Gastrocnemius medialis (tissue), 4 donors: ENCODE measurements at regions of chr3 and their contacts with region 1.

Region 1: GRCh38 chr3:149129326-149130205 is at the start of gene HPS3:
- DNase-seq: peak; percentile 83 to 85
- ATAC-seq: peak; percentile 91 to 95
- H3K4me3 ChIP-seq: peak within 1 kb of the TSS; percentile 68 to 82 (median 76)
- H3K27ac ChIP-seq: peak within 1 kb of the TSS; percentile 74 to 79 (median 74)
- H3K4me1 ChIP-seq: peaks cover 17 to 22% of the 10 kb centered on the region in 2 donors
- H3K27me3 ChIP-seq: no peaks in the 10 kb centered on the region
- CTCF ChIP-seq: peak in 2 of 5 experiments; percentile 19 to 28
- POLR2A ChIP-seq: peak; percentile 82 to 97
- total RNA-seq, gene HPS3: 3.1 to 5.5 (median 4.4) TPM

Region 2: DNA sequence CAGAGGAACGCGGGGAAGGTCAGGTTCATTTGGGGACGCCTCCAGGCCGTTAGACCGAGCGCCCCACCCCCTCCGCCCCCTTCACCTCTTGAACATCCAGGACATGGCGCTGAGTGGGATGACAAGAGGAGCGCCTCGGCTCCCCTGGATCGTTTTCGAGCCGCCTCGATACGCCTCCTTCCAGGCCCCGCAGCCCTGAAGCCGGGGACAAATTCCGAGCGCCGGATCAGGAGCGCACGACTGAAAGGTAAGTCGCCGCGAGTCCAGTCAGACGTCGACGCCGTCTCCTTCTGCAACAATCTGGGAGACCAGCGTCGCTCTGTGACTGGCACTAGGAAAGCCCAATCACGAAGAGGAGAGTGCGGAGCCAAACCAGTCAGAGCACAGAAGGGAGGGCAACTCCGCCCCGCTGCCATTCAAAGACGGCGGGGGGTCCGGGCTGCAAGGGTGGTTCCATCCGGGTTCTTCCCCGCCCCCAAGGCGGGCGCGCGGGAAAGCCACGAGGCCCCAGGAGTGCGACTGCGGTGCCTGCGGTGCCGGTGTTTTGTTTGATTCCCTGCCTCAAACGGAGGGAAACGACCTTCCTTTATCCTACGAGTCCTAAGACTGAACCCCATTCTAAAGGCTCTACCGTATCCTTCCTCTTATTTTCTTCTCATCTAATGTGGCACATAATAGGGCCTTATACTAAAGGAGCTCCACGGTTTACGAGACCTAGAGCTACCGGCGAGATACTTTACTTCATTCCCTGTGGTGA is 43.2 kb before region 1 on chr3 and contains the start of gene HLTF:
- in situ Hi-C with region 1: no loop called
- intact Hi-C with region 1: loop called (anchors 1 kb)
- DNase-seq: peak; percentile 89 to 94
- ATAC-seq: peak; percentile 99 to 100
- H3K4me3 ChIP-seq: peak within 1 kb of the TSS; percentile 63 to 78 (median 70)
- H3K27ac ChIP-seq: peak within 1 kb of the TSS; percentile 78 to 83 (median 80)
- H3K4me1 ChIP-seq: peaks cover 10 to 11% of the 10 kb centered on the region in 2 donors
- H3K27me3 ChIP-seq: no peaks in the 10 kb centered on the region
- CTCF ChIP-seq: no peak
- POLR2A ChIP-seq: peak in 1 of 2 donors; percentile 70
- total RNA-seq, gene HLTF: 2.8 to 11.0 (median 5.9) TPM